ENCODE measurements at regions of chr9 and their contacts with region 1.

Region 1: DNA sequence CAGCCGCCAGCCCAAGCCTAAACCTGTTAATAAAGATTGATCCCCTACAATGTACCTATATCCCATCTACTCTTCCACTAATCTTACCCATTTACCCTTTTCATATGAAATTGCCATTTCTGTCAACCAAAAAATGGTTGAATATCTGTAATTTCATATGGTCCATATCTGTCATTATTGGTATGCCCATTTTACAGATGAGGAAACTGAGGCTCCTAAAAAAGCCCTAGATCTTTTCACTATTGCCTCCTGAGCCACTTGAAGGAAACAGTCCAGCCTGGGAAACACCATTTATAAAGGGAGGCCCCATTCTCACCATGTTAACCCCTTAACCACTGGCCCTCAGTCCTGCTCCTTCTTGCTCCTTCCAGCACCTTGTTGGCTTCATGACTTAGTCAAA is 41.2 kb upstream of the SNAPC3 start:
- DNase-seq: no peak
- H3K4me3 ChIP-seq: no peak overlapping the region
- CTCF ChIP-seq: no peak
- POLR2A ChIP-seq: no peak

Region 2: GRCh38 chr9:17380126-17380861 is 1998.8 kb after region 1 on chr9:
- intact Hi-C with region 1: loop called (anchors 5 kb)
- DNase-seq: no peak
- H3K4me3 ChIP-seq: no peak overlapping the region
- CTCF ChIP-seq: no peak
- POLR2A ChIP-seq: no peak